AG04449 (cell line): ENCODE measurements at regions of chr4 and their contacts with region 1.

Region 1: GRCh38 chr4:154551872-154552686 is 1.9 kb upstream of the PLRG1 start:
- DNase-seq: peak; percentile 55
- H3K4me3 ChIP-seq: no peak overlapping the region
- CTCF ChIP-seq: peak; percentile 60

Region 2: GRCh38 chr4:154566639-154567204 is 14.6 kb after region 1 on chr4:
- CTCF ChIA-PET with region 1: interaction called, 16 read pairs
- POLR2A ChIA-PET with region 1: no interaction called
- DNase-seq: no peak
- H3K4me3 ChIP-seq: no peak overlapping the region
- CTCF ChIP-seq: no peak

Region 3: GRCh38 chr4:154618708-154619315 is 66.7 kb after region 1 on chr4:
- CTCF ChIA-PET with region 1: interaction called, 353 read pairs
- POLR2A ChIA-PET with region 1: interaction called, 4 read pairs
- DNase-seq: no peak
- H3K4me3 ChIP-seq: no peak overlapping the region
- CTCF ChIP-seq: peak; percentile 62

Region 4: GRCh38 chr4:154626793-154627484 is 74.9 kb after region 1 on chr4:
- CTCF ChIA-PET with region 1: interaction called, 353 read pairs
- POLR2A ChIA-PET with region 1: no interaction called
- DNase-seq: no peak
- H3K4me3 ChIP-seq: peak overlapping the region; percentile 23
- CTCF ChIP-seq: peak; percentile 52

Region 5: GRCh38 chr4:154642373-154643009 is 90.4 kb after region 1 on chr4:
- CTCF ChIA-PET with region 1: interaction called, 12 read pairs
- POLR2A ChIA-PET with region 1: no interaction called
- DNase-seq: no peak
- H3K4me3 ChIP-seq: no peak overlapping the region
- CTCF ChIP-seq: no peak

Region 6: DNA sequence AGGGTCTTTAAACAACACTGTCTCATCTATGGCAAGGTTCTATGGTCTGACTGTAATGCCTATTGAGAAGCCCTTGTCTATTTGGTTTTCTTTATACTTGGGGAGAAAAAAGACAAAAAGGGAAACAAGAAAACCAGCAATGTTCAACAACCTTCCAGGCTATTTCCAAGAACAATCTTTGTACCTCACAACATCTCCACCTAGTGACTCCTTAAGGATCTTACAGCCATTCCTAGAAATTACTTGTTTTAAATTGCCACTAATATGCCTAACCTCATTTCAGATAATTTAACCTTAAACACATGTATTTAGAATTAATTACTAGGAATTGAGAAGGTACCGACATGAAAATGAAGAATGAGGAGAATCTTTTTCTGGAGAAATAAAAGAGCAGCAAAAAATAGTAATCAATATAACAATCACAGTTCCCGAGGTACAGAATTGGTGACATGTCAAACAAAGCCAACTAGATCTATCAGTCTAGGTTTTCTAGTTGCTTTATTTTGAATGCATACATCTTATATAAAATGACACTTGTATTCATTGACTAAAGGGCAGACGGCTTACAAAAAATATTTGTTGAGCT is 227.4 kb after region 1 on chr4:
- CTCF ChIA-PET with region 1: interaction called, 10 read pairs
- POLR2A ChIA-PET with region 1: no interaction called
- DNase-seq: no peak
- H3K4me3 ChIP-seq: no peak overlapping the region
- CTCF ChIP-seq: peak; percentile 39